ENCODE measurements at regions of chr7 and their contacts with region 1.

Region 1: GRCh38 chr7:105298439-105298907 is 90.2 kb downstream of the SRPK2 start:
- DNase-seq: no peak
- H3K4me3 Mint-ChIP-seq: peak overlapping the region; percentile 19
- H3K27ac Mint-ChIP-seq: peak overlapping the region; percentile 82
- H3K4me1 Mint-ChIP-seq: peaks cover 53% of the 10 kb centered on the region
- H3K27me3 Mint-ChIP-seq: no peaks in the 10 kb centered on the region

Region 2: GRCh38 chr7:104943502-104944343 is 354.8 kb before region 1 on chr7:
- intact Hi-C with region 1: loop called (anchors 1 kb)
- DNase-seq: peak; percentile 70
- H3K4me3 Mint-ChIP-seq: peak overlapping the region; percentile 96
- H3K27ac Mint-ChIP-seq: peak overlapping the region; percentile 100
- H3K4me1 Mint-ChIP-seq: peaks cover 72% of the 10 kb centered on the region
- H3K27me3 Mint-ChIP-seq: peaks cover 2% of the 10 kb centered on the region

Region 3: GRCh38 chr7:105209870-105210269 is 88.6 kb before region 1 on chr7:
- intact Hi-C with region 1: loop called (anchors 5 kb)
- DNase-seq: no peak
- H3K4me3 Mint-ChIP-seq: no peak overlapping the region
- H3K27ac Mint-ChIP-seq: no peak overlapping the region
- H3K4me1 Mint-ChIP-seq: peaks cover 58% of the 10 kb centered on the region
- H3K27me3 Mint-ChIP-seq: no peaks in the 10 kb centered on the region

Region 4: DNA sequence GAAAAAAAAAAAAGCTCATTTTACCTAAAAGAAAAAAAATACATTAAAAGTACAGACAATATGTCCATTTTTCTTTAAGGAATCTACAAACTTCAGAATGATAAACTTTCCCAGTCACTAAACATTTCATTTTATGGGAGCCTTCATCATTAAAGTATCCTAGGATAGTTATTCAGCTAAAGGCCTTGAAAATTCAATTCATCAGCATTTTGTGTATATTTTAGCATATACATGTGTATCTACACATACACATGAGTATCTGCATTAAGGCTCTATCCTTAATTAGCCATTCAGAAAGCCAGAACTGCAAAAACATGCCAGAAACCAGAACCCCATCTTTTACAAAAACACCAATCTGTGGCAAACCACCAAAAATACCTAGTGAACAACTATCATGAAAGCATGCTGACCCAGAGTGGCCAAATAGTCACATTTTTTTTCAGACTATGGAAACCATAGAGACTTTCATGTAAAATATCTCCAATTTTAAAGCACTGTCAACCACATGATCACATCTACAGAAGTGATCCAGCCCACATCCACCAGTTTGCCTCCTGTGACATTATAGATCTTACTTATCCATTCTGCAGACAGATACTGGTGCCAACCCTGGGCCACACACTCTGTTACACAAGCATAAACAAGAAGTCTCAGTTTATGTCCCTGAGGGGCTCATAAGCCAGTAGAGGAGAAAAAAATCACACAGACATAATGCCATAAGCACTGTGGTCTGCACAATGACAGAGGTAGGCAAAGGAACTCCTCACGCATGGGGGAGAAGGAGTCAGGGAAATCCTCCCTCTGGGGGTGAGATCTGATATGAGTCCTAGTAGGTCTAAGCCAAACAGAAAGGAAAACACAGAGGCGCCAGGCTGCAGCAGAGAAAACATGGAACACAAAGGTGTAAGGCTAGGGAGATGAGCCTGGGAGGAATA is 11.0 kb after region 1 on chr7:
- intact Hi-C with region 1: loop called (anchors 1 kb)
- DNase-seq: no peak
- H3K4me3 Mint-ChIP-seq: no peak overlapping the region
- H3K27ac Mint-ChIP-seq: peak overlapping the region; percentile 11
- H3K4me1 Mint-ChIP-seq: peaks cover 50% of the 10 kb centered on the region
- H3K27me3 Mint-ChIP-seq: no peaks in the 10 kb centered on the region

Region 5: DNA sequence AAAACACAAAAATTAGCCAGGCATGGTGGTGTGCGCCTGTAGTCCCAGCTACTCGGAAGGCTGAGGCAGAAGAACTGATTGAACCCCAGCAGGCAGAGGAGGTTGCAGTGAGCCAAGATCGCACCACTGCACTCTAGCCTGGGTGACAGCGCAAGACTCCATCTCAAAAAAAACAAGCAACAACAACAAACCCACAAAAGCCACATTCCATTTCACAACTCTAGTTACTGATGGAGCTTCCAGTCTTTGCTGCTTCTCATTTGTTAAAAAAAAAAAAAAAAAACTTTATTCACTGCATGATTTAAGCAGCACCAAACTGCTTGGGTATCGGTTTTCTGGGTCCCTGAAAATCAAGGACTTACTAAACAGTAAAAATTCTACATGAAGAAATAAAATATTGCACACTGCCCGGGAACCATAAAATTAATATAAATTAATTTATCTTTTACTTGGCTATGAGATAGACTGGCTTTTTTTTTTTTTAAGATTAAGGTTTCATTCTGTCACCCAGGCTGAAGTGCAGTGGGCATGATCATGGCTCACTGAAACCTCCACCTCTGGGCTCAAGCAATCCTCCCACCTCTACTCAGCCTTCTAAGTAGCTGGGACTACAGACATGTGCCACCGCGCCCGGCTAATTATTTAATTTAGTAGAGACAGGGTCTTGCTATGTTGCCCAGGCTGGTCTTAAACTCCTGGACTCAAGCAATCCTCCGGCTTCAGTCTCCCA is 48.3 kb after region 1 on chr7:
- intact Hi-C with region 1: loop called (anchors 2 kb)
- DNase-seq: peak; percentile 35
- H3K4me3 Mint-ChIP-seq: peak overlapping the region; percentile 42
- H3K27ac Mint-ChIP-seq: peak overlapping the region; percentile 52
- H3K4me1 Mint-ChIP-seq: peaks cover 40% of the 10 kb centered on the region
- H3K27me3 Mint-ChIP-seq: no peaks in the 10 kb centered on the region

Region 6: GRCh38 chr7:105352018-105352612 is 53.6 kb after region 1 on chr7:
- intact Hi-C with region 1: loop called (anchors 1 kb)
- DNase-seq: peak; percentile 50
- H3K4me3 Mint-ChIP-seq: peak overlapping the region; percentile 52
- H3K27ac Mint-ChIP-seq: peak overlapping the region; percentile 87
- H3K4me1 Mint-ChIP-seq: peaks cover 46% of the 10 kb centered on the region
- H3K27me3 Mint-ChIP-seq: no peaks in the 10 kb centered on the region

Region 7: GRCh38 chr7:105365541-105366534 is 67.4 kb after region 1 on chr7:
- intact Hi-C with region 1: no loop called
- DNase-seq: no peak
- H3K4me3 Mint-ChIP-seq: no peak overlapping the region
- H3K27ac Mint-ChIP-seq: no peak overlapping the region
- H3K4me1 Mint-ChIP-seq: no peaks in the 10 kb centered on the region
- H3K27me3 Mint-ChIP-seq: no peaks in the 10 kb centered on the region

Region 8: DNA sequence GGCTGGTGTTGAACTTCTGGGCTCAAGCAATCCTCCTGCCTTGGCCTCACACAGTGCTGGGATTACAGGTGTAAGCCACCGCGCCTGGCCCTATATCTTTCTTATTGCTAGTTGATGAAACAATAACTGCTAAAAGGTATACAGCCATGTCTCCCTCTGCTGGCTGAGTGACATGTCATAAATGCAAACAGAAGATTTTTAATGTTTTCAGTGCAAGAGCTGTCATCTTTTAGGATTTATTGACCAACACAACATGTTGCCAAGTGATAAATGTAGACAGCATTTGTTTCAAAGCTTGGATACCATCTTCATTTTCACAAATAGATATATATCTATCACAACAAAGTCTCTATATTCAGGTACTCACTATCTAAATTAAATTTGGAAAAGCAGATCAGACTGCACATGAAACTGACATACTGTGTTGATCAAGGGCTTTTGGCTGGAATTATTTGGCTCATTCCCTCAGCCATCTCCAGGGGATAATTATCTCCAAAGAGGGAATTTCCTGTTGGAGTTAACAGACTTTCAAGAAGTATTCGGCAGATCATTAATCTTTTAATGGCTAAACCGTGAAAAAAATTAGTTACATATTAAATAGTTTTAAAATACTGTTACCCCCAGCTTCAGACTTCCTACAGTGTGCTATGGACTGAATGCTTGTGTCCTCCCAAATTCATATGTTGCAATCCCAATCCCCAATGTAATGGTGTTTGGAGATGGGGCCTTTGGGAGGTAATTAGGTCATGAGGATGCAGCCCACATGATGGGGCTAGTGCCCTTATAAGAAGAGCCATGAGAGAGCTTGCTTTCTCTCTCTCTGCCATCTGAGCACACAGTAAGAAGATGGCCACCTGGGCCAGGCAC is 131.5 kb after region 1 on chr7:
- intact Hi-C with region 1: loop called (anchors 5 kb)
- DNase-seq: peak; percentile 19
- H3K4me3 Mint-ChIP-seq: no peak overlapping the region
- H3K27ac Mint-ChIP-seq: no peak overlapping the region
- H3K4me1 Mint-ChIP-seq: peaks cover 12% of the 10 kb centered on the region
- H3K27me3 Mint-ChIP-seq: no peaks in the 10 kb centered on the region

Region 9: GRCh38 chr7:105924945-105925344 is 626.5 kb after region 1 on chr7:
- intact Hi-C with region 1: no loop called
- DNase-seq: no peak
- H3K4me3 Mint-ChIP-seq: no peak overlapping the region
- H3K27ac Mint-ChIP-seq: peak overlapping the region; percentile 56
- H3K4me1 Mint-ChIP-seq: peaks cover 18% of the 10 kb centered on the region
- H3K27me3 Mint-ChIP-seq: peaks cover 12% of the 10 kb centered on the region